ENCODE measurements at regions of chr4 and their contacts with region 1.

Region 1: GRCh38 chr4:17981063-17981462 is 40.5 kb downstream of the LCORL start:
- DNase-seq: peak in 1 of 2 experiments; percentile 41
- H3K4me3 ChIP-seq: no peak overlapping the region
- H3K27ac ChIP-seq: no peak overlapping the region
- H3K4me1 ChIP-seq: no peaks in the 10 kb centered on the region
- H3K27me3 ChIP-seq: no peaks in the 10 kb centered on the region
- CTCF ChIP-seq: no peak

Region 2: GRCh38 chr4:17781300-17782287 is 199.5 kb before region 1 on chr4 and contains the start of gene FAM184B:
- CTCF ChIA-PET with region 1: no interaction called
- POLR2A ChIA-PET with region 1: no interaction called
- intact Hi-C with region 1: no loop called
- DNase-seq: no peak
- H3K4me3 ChIP-seq: no peak within 1 kb of the TSS
- H3K27ac ChIP-seq: no peak within 1 kb of the TSS
- H3K4me1 ChIP-seq: no peaks in the 10 kb centered on the region
- H3K27me3 ChIP-seq: no peaks in the 10 kb centered on the region
- CTCF ChIP-seq: no peak
- total RNA-seq, gene FAM184B: not detected in 2 replicates

Region 3: DNA sequence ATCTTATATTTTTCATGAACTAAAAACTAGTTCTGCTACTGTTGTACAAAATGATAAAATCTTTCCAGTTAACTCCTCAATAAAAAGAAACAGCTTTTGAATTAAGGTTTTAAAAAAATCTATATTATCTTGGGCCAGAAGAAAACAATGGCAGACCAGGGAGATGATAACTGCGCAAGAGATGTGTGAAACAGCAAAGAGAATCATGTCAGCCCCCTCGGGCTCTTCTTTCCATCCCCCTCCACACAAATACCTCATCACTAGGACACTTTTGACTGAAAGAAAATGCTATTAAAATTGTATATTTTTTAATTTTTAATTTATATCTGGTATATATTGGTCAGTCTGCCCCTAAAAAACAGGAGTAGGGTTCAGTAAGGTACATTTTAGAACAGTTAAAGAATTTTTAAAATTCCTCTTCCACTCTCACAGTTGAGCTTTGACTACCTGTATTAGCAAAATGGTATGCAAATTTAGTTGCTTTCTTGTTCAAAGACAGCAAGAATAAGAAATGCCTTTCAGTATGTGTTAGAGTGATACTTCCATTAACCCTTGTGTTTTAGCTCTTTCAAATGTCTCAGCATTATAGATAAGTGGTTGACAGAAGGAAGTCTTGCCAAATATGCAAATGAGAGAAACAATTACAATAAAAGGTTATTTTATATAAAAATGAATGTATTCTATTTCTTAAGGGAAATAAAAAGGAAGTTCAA is 76.9 kb after region 1 on chr4:
- CTCF ChIA-PET with region 1: no interaction called
- POLR2A ChIA-PET with region 1: no interaction called
- intact Hi-C with region 1: no loop called
- DNase-seq: no peak
- H3K4me3 ChIP-seq: no peak overlapping the region
- H3K27ac ChIP-seq: no peak overlapping the region
- H3K4me1 ChIP-seq: no peaks in the 10 kb centered on the region
- H3K27me3 ChIP-seq: no peaks in the 10 kb centered on the region
- CTCF ChIP-seq: no peak

Region 4: DNA sequence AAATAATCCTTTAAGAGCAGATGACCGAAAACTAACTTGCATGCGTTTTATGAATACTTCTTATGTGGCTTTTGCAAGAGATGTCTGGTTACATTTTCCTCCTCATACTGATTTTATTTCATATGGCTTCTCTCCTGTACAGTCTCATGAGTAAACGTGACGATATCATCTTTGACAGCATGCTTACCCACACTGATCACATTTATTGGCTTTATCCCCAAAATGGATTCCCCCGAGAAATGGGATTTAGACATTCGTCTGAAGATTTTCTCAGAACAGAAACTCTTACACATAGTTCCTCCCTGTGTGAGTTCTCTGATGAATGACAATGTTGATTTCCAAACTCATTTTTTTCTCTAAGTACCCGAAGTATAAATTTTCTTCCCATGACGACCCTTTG is 980.2 kb after region 1 on chr4:
- CTCF ChIA-PET with region 1: no interaction called
- POLR2A ChIA-PET with region 1: no interaction called
- intact Hi-C with region 1: loop called (anchors 10 kb)
- DNase-seq: no peak
- H3K4me3 ChIP-seq: no peak overlapping the region
- H3K27ac ChIP-seq: no peak overlapping the region
- H3K4me1 ChIP-seq: no peaks in the 10 kb centered on the region
- H3K27me3 ChIP-seq: no peaks in the 10 kb centered on the region
- CTCF ChIP-seq: no peak